BJ (cell line): ENCODE measurements at regions of chr11 and their contacts with region 1.

Region 1: DNA sequence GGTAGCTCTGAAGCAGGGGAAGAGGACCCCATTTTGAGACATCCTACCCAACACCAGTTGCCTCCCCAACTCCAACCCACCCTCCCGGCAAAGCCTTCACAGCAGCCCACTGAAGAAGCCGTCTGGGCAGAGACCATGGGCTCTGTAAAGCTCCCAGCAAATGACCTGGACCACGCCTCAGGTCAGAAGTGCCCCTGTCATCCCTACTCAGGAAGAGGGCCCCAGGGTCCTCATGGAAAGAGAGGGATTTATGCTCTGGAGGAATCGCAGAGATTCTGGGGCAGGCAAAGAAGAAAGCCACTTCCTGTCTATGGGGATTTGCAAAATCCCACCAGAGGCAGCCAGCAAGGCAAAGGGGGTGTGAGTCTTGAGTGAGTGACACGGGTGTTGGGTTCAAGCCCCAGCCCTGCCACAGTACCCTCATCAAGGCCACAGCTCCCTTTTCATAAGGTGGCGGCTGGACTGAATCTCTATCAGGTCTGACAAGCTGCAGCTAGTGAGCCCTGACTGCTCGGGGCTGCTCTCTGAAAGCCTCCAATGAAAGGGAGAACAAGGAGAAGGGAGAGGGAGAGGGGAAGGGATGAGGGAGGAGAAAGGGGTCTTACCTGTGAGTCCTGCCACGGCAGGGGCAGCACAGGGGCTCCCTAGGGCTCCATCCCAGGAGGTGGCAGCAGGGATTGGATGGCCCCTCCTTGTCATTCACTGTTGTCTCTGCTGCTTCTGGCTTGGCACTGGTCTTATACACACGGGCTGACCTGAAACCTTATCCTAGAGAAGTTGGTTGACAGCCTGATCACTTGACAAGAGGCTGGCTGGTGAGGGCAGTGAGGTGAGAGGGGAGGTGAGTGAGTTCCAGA is at the start of gene UCP3:
- DNase-seq: no peak
- H3K4me3 ChIP-seq: no peak within 1 kb of the TSS
- H3K27me3 ChIP-seq: no peaks in the 10 kb centered on the region
- CTCF ChIP-seq: no peak
- polyA plus RNA-seq, gene UCP3: 0.54 and 0.77 TPM in 2 replicates

Region 2: GRCh38 chr11:73989156-73989555 is 19.4 kb before region 1 on chr11:
- CTCF ChIA-PET with region 1: no interaction called
- POLR2A ChIA-PET with region 1: no interaction called
- DNase-seq: no peak
- H3K4me3 ChIP-seq: no peak overlapping the region
- H3K27me3 ChIP-seq: no peaks in the 10 kb centered on the region
- CTCF ChIP-seq: no peak

Region 3: DNA sequence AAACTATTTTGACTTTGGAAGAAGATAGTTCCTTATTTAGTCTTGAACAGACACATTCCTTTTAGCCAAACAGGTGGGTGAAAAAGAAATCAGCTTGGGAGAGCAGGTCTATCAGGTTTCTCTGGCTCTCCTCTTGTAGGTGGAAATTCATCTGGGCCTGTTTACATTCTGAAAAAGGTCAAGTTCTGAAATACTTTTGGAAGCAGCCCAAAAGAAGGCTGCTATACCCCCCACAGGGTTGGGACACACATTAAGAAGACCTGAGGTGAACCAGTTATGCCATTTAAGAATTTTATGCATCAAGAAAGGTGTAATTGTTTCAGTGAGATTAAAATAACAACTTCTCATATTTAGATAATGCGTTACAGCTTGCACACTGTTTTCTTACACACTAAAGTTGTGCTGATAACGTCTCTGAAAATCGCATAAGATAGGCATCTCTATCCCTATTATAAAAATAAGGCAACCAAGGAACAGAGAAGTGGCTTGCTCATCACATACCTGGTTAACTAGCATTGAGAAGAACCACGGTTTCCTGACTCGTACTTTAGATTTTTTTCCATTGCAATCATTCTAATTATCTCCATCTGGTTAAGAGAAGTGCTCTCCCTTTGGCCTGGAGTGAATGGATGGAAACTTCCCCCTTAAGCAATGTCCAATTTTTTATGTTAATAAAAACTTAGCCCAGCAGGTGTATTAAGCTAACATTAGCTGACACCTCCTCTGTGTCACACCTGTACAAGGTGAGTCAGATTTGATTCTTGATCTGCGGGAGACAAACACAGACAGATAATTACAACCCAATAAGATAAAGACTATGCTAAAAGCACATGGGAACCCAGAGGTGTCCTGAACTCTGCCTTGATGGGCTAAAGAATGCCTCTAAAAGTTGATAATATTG is 60.8 kb after region 1 on chr11:
- CTCF ChIA-PET with region 1: no interaction called
- POLR2A ChIA-PET with region 1: no interaction called
- DNase-seq: peak; percentile 60
- H3K4me3 ChIP-seq: no peak overlapping the region
- H3K27me3 ChIP-seq: no peaks in the 10 kb centered on the region
- CTCF ChIP-seq: no peak

Region 4: DNA sequence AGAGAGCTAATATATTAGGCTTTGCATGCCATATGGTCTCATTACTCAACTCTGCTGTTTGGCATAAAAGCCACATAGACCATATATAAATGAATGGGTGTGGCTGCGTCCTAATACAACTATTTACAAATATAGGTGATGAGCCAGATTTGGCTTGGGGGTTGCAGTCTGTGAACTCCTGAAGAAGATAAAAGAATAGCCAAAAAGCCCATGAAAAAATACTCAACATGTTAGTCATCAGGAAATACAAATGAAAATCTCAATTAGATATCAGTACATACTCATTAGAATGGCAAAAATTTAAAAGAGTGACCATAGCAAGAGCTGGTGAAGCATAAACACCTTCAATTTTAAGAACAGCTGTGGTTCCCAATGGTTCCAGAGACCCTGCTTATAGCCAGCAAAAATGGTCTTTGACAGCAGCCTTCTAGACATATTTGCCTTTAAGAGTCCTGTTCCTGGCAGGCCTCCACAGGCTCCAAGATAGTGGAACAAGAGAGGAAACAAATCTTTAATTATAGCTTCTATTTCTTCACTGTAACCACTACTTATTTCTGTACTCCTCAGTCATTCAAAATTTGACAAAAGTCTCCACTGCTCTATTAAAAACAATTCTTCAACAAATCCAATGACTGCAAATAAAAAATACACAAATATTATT is 146.2 kb after region 1 on chr11:
- CTCF ChIA-PET with region 1: no interaction called
- POLR2A ChIA-PET with region 1: no interaction called
- DNase-seq: no peak
- H3K4me3 ChIP-seq: no peak overlapping the region
- H3K27me3 ChIP-seq: no peaks in the 10 kb centered on the region
- CTCF ChIP-seq: no peak

Region 5: DNA sequence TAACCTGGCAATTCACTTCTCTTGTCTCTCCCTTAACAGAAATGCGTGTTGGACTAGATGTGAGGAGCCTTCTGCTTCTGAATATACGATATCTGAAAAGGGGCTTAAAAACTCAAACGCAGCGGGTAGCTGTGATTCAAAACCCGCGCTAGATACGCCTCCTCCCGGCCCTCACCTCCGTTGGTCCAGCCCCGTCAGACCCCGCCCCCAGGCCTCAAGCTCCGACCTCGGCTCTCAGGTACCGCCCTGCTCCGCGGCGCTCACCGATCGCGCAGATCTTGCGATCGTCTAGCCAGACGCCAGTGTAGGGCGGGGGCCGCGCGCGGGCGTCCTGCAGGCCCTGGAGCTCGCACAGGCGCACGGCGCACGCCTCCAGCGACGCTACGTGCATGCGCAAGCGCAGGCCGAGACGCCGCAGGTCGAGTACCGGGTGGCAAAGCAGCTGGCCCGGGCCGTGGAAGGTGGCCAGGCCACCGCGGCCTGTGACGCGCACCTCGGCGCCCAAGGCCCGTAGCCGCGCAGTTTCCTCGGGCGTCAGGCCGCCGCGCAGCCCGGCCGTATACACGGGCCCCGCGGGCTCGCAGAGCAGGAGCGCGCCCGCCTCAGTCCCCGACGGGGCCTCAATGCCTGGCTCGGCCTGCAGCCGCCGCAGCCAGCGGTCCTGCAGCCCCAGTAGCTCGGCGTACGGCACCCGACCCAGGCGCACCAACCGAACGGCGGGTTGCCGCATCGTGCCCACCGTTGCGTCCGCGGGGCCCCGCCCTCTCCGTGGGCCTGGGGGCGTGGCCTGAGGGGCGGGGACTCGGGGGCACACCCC is 484.6 kb after region 1 on chr11 and contains the start of gene LIPT2:
- CTCF ChIA-PET with region 1: no interaction called
- POLR2A ChIA-PET with region 1: interaction called, 15 read pairs
- DNase-seq: peak; percentile 87
- H3K4me3 ChIP-seq: peak within 1 kb of the TSS; percentile 64
- H3K27me3 ChIP-seq: no peaks in the 10 kb centered on the region
- CTCF ChIP-seq: no peak
- polyA plus RNA-seq, gene LIPT2: 2.5 and 2.6 TPM in 2 replicates

Region 6: DNA sequence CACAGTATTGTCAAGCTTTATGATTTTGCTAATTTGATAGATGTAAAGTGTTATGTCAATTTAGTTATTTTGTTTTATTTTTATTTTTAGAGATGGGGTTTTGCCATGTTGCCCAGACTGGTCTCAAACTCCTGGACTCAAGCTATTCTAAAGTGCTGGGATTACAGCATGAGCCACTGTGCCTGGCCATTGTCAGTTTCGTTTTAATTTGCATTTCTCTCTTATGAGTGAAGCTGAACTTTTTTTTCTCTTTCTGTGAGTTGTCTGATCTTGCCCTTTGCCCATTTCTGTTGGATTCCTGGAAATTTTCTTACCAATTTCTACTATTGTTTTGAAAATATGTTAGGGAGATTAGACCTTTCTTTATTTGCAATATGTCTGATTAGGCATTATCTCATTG is 995.6 kb after region 1 on chr11:
- CTCF ChIA-PET with region 1: no interaction called
- POLR2A ChIA-PET with region 1: no interaction called
- DNase-seq: no peak
- H3K4me3 ChIP-seq: no peak overlapping the region
- H3K27me3 ChIP-seq: no peaks in the 10 kb centered on the region
- CTCF ChIP-seq: no peak